ENCODE measurements at regions of chr9 and their contacts with region 1.

Region 1: DNA sequence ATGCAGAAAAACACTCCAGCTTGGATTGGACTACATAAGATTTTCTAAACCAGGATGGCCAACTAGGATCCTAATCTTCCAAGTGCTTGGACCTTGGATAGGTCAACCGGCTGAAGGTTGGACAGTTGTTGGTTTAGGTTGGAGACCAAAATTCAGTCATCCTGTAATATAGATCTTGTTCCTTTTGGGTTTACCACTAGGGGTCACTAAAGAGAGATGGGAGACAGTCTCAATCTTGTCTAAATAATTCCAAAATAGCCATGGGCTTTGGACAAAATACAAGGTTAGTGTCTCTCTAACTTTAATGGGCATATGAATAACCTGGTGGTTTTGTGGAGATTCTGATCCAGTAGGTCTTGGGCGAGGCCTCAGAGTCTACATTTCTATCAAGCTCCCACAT is 148.7 kb upstream of the ERCC6L2 start:
- DNase-seq: peak; percentile 5
- H3K4me3 ChIP-seq: no peak overlapping the region
- CTCF ChIP-seq: peak; percentile 50

Region 2: GRCh38 chr9:95740217-95741004 is 13.7 kb after region 1 on chr9:
- CTCF ChIA-PET with region 1: interaction called, 12 read pairs
- POLR2A ChIA-PET with region 1: no interaction called
- DNase-seq: no peak
- H3K4me3 ChIP-seq: no peak overlapping the region
- CTCF ChIP-seq: no peak

Region 3: GRCh38 chr9:96217754-96218693 is 491.3 kb after region 1 on chr9:
- CTCF ChIA-PET with region 1: interaction called, 11 read pairs
- POLR2A ChIA-PET with region 1: no interaction called
- DNase-seq: no peak
- H3K4me3 ChIP-seq: peak overlapping the region; percentile 51
- CTCF ChIP-seq: peak; percentile 94

Measured in AG04449 (cell line).